Calu3 (cell line): ENCODE measurements at regions of chr18 and their contacts with region 1.

Region 1: GRCh38 chr18:22207021-22207758 is 37.8 kb downstream of the GATA6 start:
- DNase-seq: no peak
- H3K4me3 Mint-ChIP-seq: no peak overlapping the region
- H3K27ac Mint-ChIP-seq: no peak overlapping the region
- H3K4me1 Mint-ChIP-seq: peaks cover 46% of the 10 kb centered on the region
- H3K27me3 Mint-ChIP-seq: no peaks in the 10 kb centered on the region
- CTCF ChIP-seq: no peak

Region 2: GRCh38 chr18:22276334-22276713 is 69.1 kb after region 1 on chr18:
- CTCF ChIA-PET with region 1: no interaction called
- intact Hi-C with region 1: no loop called
- DNase-seq: no peak
- H3K4me3 Mint-ChIP-seq: no peak overlapping the region
- H3K27ac Mint-ChIP-seq: no peak overlapping the region
- H3K4me1 Mint-ChIP-seq: peaks cover 18% of the 10 kb centered on the region
- H3K27me3 Mint-ChIP-seq: peaks cover 8% of the 10 kb centered on the region
- CTCF ChIP-seq: no peak

Region 3: DNA sequence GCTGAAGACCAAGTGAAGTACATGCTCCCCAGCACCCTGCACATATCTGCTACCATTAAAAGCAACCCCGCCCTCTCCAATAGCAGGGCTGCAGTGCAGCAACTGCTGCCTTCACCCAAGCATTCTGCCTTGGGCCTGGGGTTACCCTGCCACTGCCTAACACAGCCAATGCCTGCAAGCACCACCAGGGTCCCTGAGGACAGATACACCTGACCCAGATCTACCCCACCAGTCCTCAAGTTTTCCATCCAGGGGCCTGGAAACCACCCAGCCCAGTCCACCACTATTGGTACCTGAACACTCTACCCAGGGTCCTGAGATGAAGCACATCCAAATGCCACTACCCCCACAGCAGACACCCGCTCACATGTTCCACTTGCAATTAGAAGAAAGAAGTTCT is 544.8 kb after region 1 on chr18:
- CTCF ChIA-PET with region 1: no interaction called
- intact Hi-C with region 1: no loop called
- DNase-seq: no peak
- H3K4me3 Mint-ChIP-seq: no peak overlapping the region
- H3K27ac Mint-ChIP-seq: no peak overlapping the region
- H3K4me1 Mint-ChIP-seq: no peaks in the 10 kb centered on the region
- H3K27me3 Mint-ChIP-seq: no peaks in the 10 kb centered on the region
- CTCF ChIP-seq: no peak

Region 4: GRCh38 chr18:22964116-22964515 is 756.9 kb after region 1 on chr18:
- CTCF ChIA-PET with region 1: no interaction called
- intact Hi-C with region 1: loop called (anchors 10 kb)
- DNase-seq: no peak
- H3K4me3 Mint-ChIP-seq: no peak overlapping the region
- H3K27ac Mint-ChIP-seq: no peak overlapping the region
- H3K4me1 Mint-ChIP-seq: no peaks in the 10 kb centered on the region
- H3K27me3 Mint-ChIP-seq: no peaks in the 10 kb centered on the region
- CTCF ChIP-seq: no peak